ENCODE measurements at regions of chr12 and their contacts with region 1.

Region 1: GRCh38 chr12:64636856-64637255 is 26.6 kb downstream of the RASSF3 start:
- DNase-seq: no peak
- H3K4me3 ChIP-seq: no peak overlapping the region
- H3K27ac ChIP-seq: peak overlapping the region; percentile 23
- H3K4me1 ChIP-seq: peaks cover 28% of the 10 kb centered on the region
- H3K27me3 ChIP-seq: no peaks in the 10 kb centered on the region
- CTCF ChIP-seq: no peak

Region 2: GRCh38 chr12:63821781-63822251 is 815.0 kb before region 1 on chr12:
- CTCF ChIA-PET with region 1: no interaction called
- POLR2A ChIA-PET with region 1: no interaction called
- intact Hi-C with region 1: no loop called
- DNase-seq: no peak
- H3K4me3 ChIP-seq: no peak overlapping the region
- H3K27ac ChIP-seq: no peak overlapping the region
- H3K4me1 ChIP-seq: no peaks in the 10 kb centered on the region
- H3K27me3 ChIP-seq: no peaks in the 10 kb centered on the region
- CTCF ChIP-seq: no peak

Region 3: GRCh38 chr12:64660237-64661018 is 23.6 kb after region 1 on chr12:
- CTCF ChIA-PET with region 1: interaction called, 10 read pairs
- POLR2A ChIA-PET with region 1: no interaction called
- intact Hi-C with region 1: no loop called
- DNase-seq: no peak
- H3K4me3 ChIP-seq: no peak overlapping the region
- H3K27ac ChIP-seq: no peak overlapping the region
- H3K4me1 ChIP-seq: peaks cover 16% of the 10 kb centered on the region
- H3K27me3 ChIP-seq: no peaks in the 10 kb centered on the region
- CTCF ChIP-seq: no peak